ENCODE measurements at regions of chr19 and their contacts with region 1.

Region 1: GRCh38 chr19:1967087-1967608 is 26.2 kb downstream of the CSNK1G2 start:
- DNase-seq: peak in 8 of 9 experiments; percentile 15 to 76 (median 62)
- ATAC-seq: peak; percentile 65
- H3K4me3 ChIP-seq: peak overlapping the region in 1 of 2 experiments; percentile 8
- H3K4me3 Mint-ChIP-seq: peak overlapping the region; percentile 62
- H3K27ac ChIP-seq: peak overlapping the region; percentile 6 to 46
- H3K27ac Mint-ChIP-seq: peak overlapping the region; percentile 87
- H3K4me1 ChIP-seq: peaks cover 16% of the 10 kb centered on the region
- H3K4me1 Mint-ChIP-seq: peaks cover 21% of the 10 kb centered on the region
- H3K27me3 ChIP-seq: no peaks in the 10 kb centered on the region
- H3K27me3 Mint-ChIP-seq: no peaks in the 10 kb centered on the region
- CTCF ChIP-seq: no peak

Region 2: GRCh38 chr19:1942078-1942933 is 24.8 kb before region 1 on chr19:
- CTCF ChIA-PET with region 1: interaction called, 3 read pairs
- POLR2A ChIA-PET with region 1: no interaction called
- intact Hi-C with region 1: loop called in 1 of 2 experiments (anchors 2 kb)
- DNase-seq: peak; percentile 65 to 94 (median 83)
- ATAC-seq: peak; percentile 52
- H3K4me3 ChIP-seq: peak overlapping the region; percentile 80 to 100
- H3K4me3 Mint-ChIP-seq: peak overlapping the region; percentile 93
- H3K27ac ChIP-seq: peak overlapping the region; percentile 88 to 98
- H3K27ac Mint-ChIP-seq: peak overlapping the region; percentile 93
- H3K4me1 ChIP-seq: peaks cover 34% of the 10 kb centered on the region
- H3K4me1 Mint-ChIP-seq: peaks cover 30% of the 10 kb centered on the region
- H3K27me3 ChIP-seq: no peaks in the 10 kb centered on the region
- H3K27me3 Mint-ChIP-seq: no peaks in the 10 kb centered on the region
- CTCF ChIP-seq: no peak

Measured in CD8-positive, alpha-beta T cell (primary cell).